Posterior vena cava (tissue), 2 donors: ENCODE measurements at regions of chr2 and their contacts with region 1.

Region 1: GRCh38 chr2:121860033-121860757 is 104.7 kb downstream of the TSN start:
- DNase-seq: no peak

Region 2: DNA sequence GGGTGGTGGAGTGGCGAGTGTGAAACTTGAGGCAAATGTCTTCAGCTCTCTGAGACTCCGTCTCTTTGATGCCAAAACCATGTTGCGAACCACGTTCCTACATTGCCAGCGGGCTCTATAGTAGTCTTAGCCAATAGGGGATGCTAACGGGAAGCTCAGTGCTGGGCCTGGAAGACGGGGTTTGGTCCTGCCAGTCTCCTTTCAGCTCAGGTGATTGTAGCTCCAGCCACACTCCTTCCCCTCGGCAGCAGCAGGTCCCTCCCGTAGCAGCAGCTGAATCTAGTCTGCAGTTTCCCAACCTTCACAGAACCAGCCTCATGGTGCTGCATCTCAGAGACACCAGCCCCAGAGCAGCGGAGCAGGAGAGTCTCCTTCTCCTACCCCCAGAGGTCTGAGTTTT is 684.9 kb before region 1 on chr2:
- intact Hi-C with region 1: loop called in 1 of 2 experiments (anchors 5 kb)
- DNase-seq: no peak

Region 3: GRCh38 chr2:121888200-121888579 is 28.0 kb after region 1 on chr2:
- intact Hi-C with region 1: no loop called
- DNase-seq: no peak